Psoas muscle (tissue), 8 donors: ENCODE measurements at regions of chr15 and their contacts with region 1.

Region 1: GRCh38 chr15:99123706-99124451 is 19.0 kb downstream of the SYNM start:
- DNase-seq: peak; percentile 91 to 96
- ATAC-seq: peak; percentile 81 to 87 (median 84)
- H3K4me3 ChIP-seq: peak overlapping the region; percentile 54
- H3K27ac ChIP-seq: peak overlapping the region; percentile 96
- H3K4me1 ChIP-seq: peaks cover 93% of the 10 kb centered on the region
- H3K27me3 ChIP-seq: no peaks in the 10 kb centered on the region
- CTCF ChIP-seq: no peak

Region 2: DNA sequence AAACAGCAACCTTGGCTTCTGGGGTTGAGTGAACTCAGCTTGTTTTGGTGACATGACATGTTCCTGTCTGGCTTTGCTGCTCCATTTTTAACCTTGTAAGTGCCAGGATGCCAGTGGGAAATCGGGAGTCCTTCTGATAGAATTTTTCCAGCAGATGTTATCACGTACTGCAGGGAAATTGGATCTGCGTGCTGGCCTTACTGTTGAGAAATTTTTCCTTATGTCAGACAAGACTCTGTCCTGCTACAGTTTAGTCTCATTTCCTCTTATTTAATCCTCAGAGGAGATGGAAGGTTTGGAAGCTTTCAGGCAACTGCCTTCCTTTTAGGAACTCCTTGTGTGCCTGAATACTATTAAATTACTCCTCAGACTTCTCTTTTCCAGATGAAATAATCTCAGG is 196.9 kb before region 1 on chr15:
- intact Hi-C with region 1: no loop called
- DNase-seq: no peak
- ATAC-seq: peak in 2 of 4 donors; percentile 35 to 46
- H3K4me3 ChIP-seq: no peak overlapping the region
- H3K27ac ChIP-seq: peak overlapping the region; percentile 30
- H3K4me1 ChIP-seq: peaks cover 20% of the 10 kb centered on the region
- H3K27me3 ChIP-seq: no peaks in the 10 kb centered on the region
- CTCF ChIP-seq: no peak

Region 3: DNA sequence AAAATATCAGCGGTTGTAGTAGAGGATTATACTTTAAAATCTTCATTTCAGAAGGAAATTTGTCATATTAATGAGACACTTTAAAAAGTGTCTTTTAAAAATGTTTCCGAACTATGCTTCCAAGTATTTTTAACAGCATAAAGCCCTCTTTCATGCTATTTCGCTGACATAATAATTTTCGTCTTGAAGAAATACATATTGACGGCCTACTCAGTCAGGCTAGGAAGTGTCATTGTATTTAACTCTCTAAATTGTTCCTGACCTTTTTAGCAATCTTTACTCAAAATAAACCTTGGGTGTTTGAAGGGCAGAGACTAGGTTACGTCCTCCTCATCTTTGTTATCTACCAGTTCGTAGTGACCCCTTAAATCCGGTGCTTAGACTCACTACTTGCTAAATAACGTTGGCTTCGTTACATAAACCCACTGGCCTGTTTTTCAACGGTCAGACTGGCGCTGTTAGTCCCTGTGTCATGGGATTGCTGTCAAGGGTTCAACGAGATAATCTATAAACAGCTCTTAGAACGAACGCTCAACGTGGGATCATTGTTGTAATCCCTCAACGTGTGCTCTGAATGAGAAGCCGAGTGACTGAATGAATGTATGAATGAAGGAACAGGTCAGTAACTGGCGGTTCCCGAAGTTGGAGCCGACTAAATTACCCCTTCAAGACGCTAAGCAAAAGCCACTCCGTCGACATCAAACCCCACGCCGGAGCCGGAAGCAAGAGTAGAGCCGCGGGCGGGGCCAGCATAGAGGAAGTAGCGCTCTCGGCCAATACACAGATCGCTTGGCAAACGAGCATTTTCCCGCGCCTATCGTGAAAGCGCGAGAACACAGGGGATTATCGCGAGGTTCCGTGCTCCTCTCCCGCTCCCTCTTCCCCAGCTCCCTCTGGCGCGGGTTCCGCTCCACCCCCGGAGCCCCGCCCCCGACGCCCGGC is 126.9 kb after region 1 on chr15:
- intact Hi-C with region 1: loop called in 1 of 2 experiments (anchors 5 kb)
- DNase-seq: peak; percentile 98 to 99
- ATAC-seq: peak; percentile 92 to 96 (median 94)
- H3K4me3 ChIP-seq: peak overlapping the region; percentile 82
- H3K27ac ChIP-seq: peak overlapping the region; percentile 98
- H3K4me1 ChIP-seq: peaks cover 23% of the 10 kb centered on the region
- H3K27me3 ChIP-seq: no peaks in the 10 kb centered on the region
- CTCF ChIP-seq: no peak